ENCODE measurements at regions of chr19 and their contacts with region 1.

Region 1: DNA sequence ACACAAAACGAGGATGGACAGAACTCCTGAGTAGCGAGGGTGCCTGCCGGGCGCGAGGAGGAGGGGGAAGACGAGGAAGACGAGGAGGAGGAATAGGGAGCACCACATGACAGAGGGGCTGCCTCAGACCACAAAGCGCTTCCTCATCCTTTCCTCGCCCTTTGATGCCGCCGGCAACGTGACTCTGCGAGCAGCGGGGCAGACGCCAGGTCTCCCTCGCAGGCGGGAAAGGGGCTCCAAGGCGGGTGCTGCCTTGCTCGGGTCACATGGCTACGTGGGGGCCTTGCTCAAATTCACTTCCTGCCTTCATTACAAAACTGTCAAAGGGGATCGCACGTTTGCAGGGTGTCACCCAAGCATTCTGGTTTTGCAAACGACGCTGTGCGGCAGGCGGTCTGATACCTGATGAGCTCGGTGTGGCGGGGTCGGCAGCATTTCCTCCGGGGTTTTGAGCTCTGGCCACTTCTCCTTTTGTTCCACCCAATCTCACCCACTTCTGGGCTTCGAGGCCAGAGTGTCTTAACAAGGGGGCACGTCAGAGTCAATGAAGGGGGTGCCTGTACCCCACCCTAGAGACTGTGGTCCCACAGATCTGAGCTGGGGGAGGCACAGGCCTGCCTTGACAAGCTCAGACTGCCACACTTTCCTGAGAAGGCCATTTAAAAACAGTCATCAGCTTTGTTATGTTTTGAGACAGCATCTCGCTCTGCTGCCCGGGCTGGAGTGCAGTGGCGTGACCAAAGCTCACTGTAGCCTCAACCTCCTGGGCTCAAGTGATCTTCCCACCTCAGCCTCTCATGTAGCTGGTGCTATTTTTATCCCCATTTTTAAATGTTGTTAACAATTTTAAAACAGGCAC is 14.9 kb downstream of the MAP2K2 start:
- DNase-seq: peak; percentile 63 to 92 (median 84)
- ATAC-seq: peak; percentile 61 to 68
- H3K4me3 Mint-ChIP-seq: peak overlapping the region; percentile 46 to 83 (median 70)
- H3K27ac Mint-ChIP-seq: peak overlapping the region; percentile 90 to 98 (median 96)
- H3K4me1 Mint-ChIP-seq: peaks cover 32 to 82% (median 72%) of the 10 kb centered on the region in 4 donors
- H3K27me3 Mint-ChIP-seq: no peaks in the 10 kb centered on the region

Region 2: GRCh38 chr19:4077882-4078614 is 30.9 kb before region 1 on chr19:
- POLR2A ChIA-PET with region 1: interaction called, 24 read pairs
- DNase-seq: peak in 6 of 10 donors; percentile 34 to 73 (median 46)
- ATAC-seq: peak; percentile 74 to 91
- H3K4me3 Mint-ChIP-seq: peak overlapping the region; percentile 74 to 92 (median 87)
- H3K27ac Mint-ChIP-seq: peak overlapping the region; percentile 81 to 94 (median 90)
- H3K4me1 Mint-ChIP-seq: peaks cover 5 to 41% (median 34%) of the 10 kb centered on the region in 4 donors
- H3K27me3 Mint-ChIP-seq: no peaks in the 10 kb centered on the region

Region 3: DNA sequence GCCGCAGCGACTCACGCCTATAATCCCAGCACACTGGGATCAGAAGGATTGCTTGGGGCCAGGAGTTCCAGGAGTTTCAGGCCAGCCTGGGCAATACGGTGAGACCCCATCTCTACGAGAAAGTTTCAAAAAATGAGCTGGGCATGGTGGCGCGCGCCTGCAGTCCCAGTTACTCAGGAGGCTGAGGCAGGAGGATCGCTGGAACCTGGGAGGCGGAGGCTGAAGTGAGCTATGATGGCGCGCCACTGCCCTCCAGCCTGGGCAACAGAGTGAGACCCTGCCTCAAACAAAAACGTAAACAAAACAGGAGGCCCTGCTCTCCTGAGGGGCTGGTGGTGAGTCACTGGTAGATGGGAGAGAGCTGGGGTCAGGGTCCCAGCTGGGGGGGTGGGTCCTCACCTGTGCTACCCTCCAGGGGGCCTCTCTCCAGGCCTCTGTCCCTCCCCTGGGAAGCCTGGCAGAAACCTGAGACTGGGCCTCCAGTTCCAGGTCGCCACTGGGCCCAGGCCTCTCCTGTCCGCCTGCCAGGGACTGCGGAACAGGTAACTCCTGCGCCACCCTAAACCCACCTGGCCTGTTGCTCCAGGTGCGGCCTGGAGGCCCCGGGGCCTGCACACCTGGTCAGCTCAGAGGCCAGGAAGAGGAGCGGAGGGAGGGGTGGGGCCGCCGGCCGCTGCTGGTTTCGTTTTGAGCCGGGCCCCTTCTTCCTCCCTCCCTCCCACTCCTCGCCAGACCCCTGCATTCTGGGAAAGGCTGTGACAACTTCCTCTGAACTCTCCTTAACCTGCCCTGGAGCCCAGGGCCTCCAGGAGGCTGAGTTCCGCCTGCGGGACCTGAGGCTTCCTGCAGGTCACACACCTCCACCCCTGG is 25.1 kb before region 1 on chr19:
- POLR2A ChIA-PET with region 1: interaction called, 48 read pairs
- DNase-seq: no peak
- ATAC-seq: peak; percentile 13 to 61
- H3K4me3 Mint-ChIP-seq: peak overlapping the region in 9 of 10 donors; percentile 20 to 79 (median 69)
- H3K27ac Mint-ChIP-seq: peak overlapping the region; percentile 83 to 94 (median 92)
- H3K4me1 Mint-ChIP-seq: peaks cover 16 to 60% (median 51%) of the 10 kb centered on the region in 4 donors
- H3K27me3 Mint-ChIP-seq: no peaks in the 10 kb centered on the region

Region 4: DNA sequence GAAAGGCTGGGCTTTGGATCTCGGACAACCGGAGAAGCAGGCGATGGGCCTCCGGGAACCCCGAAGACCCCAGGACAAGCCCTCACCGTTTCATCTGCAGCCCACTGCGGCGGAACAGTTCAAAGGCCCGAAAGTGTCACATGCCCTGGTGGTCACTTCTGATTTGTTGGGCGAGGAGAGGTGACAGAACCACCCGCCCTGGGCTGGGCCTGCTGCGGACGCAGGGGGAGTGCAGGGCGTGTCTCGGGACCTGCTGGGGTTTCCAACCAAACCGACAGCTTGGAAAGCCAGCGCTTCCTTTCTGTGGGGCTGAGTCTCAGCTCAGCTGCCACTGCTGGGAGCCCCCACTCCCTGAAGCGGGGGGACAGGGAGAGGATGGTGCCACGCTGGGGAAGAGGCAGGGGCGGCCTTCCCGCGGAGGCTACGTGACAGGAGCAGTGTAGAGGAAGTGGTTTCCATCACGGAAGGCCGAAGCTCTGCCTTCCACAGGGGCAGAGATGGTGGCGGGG is 19.5 kb before region 1 on chr19:
- POLR2A ChIA-PET with region 1: interaction called, 48 read pairs
- DNase-seq: peak in 7 of 10 donors; percentile 14 to 64 (median 40)
- ATAC-seq: peak; percentile 48 to 56
- H3K4me3 Mint-ChIP-seq: peak overlapping the region; percentile 58 to 84 (median 78)
- H3K27ac Mint-ChIP-seq: peak overlapping the region; percentile 78 to 96 (median 94)
- H3K4me1 Mint-ChIP-seq: peaks cover 18 to 56% (median 46%) of the 10 kb centered on the region in 4 donors
- H3K27me3 Mint-ChIP-seq: no peaks in the 10 kb centered on the region

Region 5: GRCh38 chr19:4182084-4182810 is 73.3 kb after region 1 on chr19 and contains the starts of genes ANKRD24 and SIRT6:
- POLR2A ChIA-PET with region 1: no interaction called
- DNase-seq: peak; percentile 92 to 98 (median 95)
- ATAC-seq: peak; percentile 89 to 93
- H3K4me3 Mint-ChIP-seq: peak within 1 kb of the TSS; percentile 94 to 99 (median 97)
- H3K27ac Mint-ChIP-seq: peak within 1 kb of the TSS; percentile 91 to 98 (median 96)
- H3K4me1 Mint-ChIP-seq: peaks cover 29 to 44% (median 42%) of the 10 kb centered on the region in 4 donors
- H3K27me3 Mint-ChIP-seq: peaks cover 0 to 2% (median 0%) of the 10 kb centered on the region in 5 donors
- polyA plus RNA-seq, gene ANKRD24: 0.36 to 0.50 TPM in 2 of 3 donors, not detected in the other
- polyA plus RNA-seq, gene SIRT6: 0.86 to 4.3 (median 1.4) TPM